ENCODE measurements at regions of chr7 and their contacts with region 1.

Region 1: GRCh38 chr7:24290004-24290641 is 6.1 kb downstream of the NPY start:
- DNase-seq: peak; percentile 76
- ATAC-seq: peak; percentile 100
- H3K4me3 ChIP-seq: no peak overlapping the region
- H3K27ac ChIP-seq: no peak overlapping the region
- H3K4me1 ChIP-seq: peaks cover 0 to 6% of the 10 kb centered on the region in 2 experiments; a peak in 2 of 4 replicates
- H3K27me3 ChIP-seq: peaks cover 10% of the 10 kb centered on the region
- CTCF ChIP-seq: peak; percentile 57 to 66 (median 60); a peak in 5 of 6 replicates
- POLR2A ChIP-seq: no peak
- RAD21 ChIP-seq: peak; percentile 84

Region 2: DNA sequence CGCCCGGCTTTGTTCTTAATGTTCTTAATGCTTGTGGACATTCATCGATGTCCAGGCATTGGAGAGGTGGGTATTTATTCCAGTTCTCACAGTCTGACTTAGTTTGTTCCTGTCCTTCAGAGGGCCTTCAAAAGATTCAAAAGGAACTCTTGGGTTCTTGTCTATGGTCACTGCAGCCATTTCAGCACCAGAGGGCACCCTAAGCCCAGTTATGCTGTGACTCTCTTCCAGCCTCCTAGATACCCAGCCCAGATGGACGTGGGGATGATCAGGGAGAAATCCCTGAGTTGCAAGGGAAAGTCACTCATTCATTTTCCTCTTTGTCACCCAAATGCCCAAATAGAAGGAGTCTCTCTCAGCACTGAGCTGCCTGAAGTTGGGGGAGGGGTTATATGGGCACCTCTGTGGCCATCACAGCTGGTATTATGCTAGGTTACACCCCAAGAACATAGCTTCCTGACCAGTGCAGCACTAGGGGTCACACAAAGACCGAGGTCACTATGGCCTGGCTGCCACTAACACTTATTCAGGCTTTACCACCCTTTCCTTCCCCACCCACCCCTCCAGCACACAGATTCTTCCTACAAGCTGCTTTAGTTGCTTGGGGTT is 719.4 kb before region 1 on chr7:
- CTCF ChIA-PET with region 1: no interaction called
- POLR2A ChIA-PET with region 1: no interaction called
- RAD21 ChIA-PET with region 1: no interaction called
- intact Hi-C with region 1: loop called (anchors 1 kb)
- DNase-seq: peak; percentile 77
- ATAC-seq: peak; percentile 99
- H3K4me3 ChIP-seq: no peak overlapping the region
- H3K27ac ChIP-seq: no peak overlapping the region
- H3K4me1 ChIP-seq: peaks cover 0 to 4% of the 10 kb centered on the region in 2 experiments; a peak in 1 of 4 replicates
- H3K27me3 ChIP-seq: no peaks in the 10 kb centered on the region
- CTCF ChIP-seq: peak; percentile 86 to 91 (median 90)
- POLR2A ChIP-seq: no peak
- RAD21 ChIP-seq: peak; percentile 97

Region 3: GRCh38 chr7:23938937-23939552 is 351.1 kb before region 1 on chr7:
- CTCF ChIA-PET with region 1: interaction called, 11 read pairs
- POLR2A ChIA-PET with region 1: no interaction called
- RAD21 ChIA-PET with region 1: no interaction called
- intact Hi-C with region 1: no loop called
- DNase-seq: peak; percentile 47
- ATAC-seq: peak; percentile 100
- H3K4me3 ChIP-seq: no peak overlapping the region
- H3K27ac ChIP-seq: no peak overlapping the region
- H3K4me1 ChIP-seq: peaks cover 3 to 6% of the 10 kb centered on the region in 2 experiments; a peak in 2 of 4 replicates
- H3K27me3 ChIP-seq: no peaks in the 10 kb centered on the region
- CTCF ChIP-seq: peak; percentile 40 to 69 (median 68); a peak in 5 of 6 replicates
- POLR2A ChIP-seq: no peak
- RAD21 ChIP-seq: peak; percentile 74

Region 4: GRCh38 chr7:24587848-24588247 is 297.7 kb after region 1 on chr7:
- CTCF ChIA-PET with region 1: no interaction called
- POLR2A ChIA-PET with region 1: no interaction called
- RAD21 ChIA-PET with region 1: no interaction called
- intact Hi-C with region 1: loop called (anchors 1 kb)
- DNase-seq: no peak
- ATAC-seq: peak; percentile 85
- H3K4me3 ChIP-seq: no peak overlapping the region
- H3K27ac ChIP-seq: no peak overlapping the region
- H3K4me1 ChIP-seq: no peaks in the 10 kb centered on the region
- H3K27me3 ChIP-seq: no peaks in the 10 kb centered on the region
- CTCF ChIP-seq: peak; percentile 60 to 79 (median 62)
- POLR2A ChIP-seq: no peak
- RAD21 ChIP-seq: peak; percentile 72

Region 5: DNA sequence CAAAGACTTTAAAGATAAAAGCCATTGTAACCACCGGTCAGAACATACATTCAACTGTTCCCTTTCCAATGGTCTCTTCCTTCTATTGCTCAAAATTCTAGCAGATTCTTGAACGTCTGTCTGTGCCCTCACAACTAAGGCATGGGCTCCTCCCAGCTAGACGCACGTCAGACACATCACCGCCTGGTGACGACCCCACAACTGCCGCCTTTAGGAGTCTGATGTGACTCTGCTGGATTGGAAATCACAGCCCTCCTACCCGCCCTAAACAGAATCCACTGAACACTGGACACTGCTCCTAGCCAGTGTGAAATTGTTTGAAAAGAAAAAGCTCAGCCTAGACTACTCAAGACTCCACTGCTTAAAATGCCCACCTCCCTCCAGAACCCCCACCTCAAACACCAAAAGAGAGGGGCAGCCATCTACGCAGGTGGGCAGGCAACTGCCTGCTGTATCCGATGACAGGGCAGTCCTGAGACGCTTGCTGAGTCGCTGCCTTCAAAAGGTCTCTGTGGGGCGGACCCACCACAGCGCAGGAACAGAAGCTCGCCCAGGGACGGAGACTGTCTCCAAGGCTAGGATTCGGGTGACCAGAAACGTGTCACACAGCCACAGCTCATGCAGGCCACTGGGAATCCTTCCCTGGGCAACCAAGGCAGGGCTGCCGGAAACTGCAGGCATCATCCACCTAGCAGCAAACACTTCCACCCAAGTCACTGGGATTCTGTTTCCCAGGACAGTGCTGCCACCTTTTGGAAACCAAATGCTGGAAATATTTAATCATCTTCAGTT is 432.5 kb after region 1 on chr7:
- CTCF ChIA-PET with region 1: no interaction called
- POLR2A ChIA-PET with region 1: no interaction called
- RAD21 ChIA-PET with region 1: no interaction called
- intact Hi-C with region 1: loop called (anchors 10 kb)
- DNase-seq: no peak
- ATAC-seq: peak; percentile 72
- H3K4me3 ChIP-seq: no peak overlapping the region
- H3K27ac ChIP-seq: no peak overlapping the region
- H3K4me1 ChIP-seq: peaks cover 10 to 12% of the 10 kb centered on the region in 2 experiments
- H3K27me3 ChIP-seq: no peaks in the 10 kb centered on the region
- CTCF ChIP-seq: peak; percentile 7 to 47 (median 44); a peak in 3 of 6 replicates
- POLR2A ChIP-seq: no peak
- RAD21 ChIP-seq: peak; percentile 73

Measured in HCT116 (cell line).